WTC11 (cell line): ENCODE measurements at regions of chr5 and their contacts with region 1.

Region 1: DNA sequence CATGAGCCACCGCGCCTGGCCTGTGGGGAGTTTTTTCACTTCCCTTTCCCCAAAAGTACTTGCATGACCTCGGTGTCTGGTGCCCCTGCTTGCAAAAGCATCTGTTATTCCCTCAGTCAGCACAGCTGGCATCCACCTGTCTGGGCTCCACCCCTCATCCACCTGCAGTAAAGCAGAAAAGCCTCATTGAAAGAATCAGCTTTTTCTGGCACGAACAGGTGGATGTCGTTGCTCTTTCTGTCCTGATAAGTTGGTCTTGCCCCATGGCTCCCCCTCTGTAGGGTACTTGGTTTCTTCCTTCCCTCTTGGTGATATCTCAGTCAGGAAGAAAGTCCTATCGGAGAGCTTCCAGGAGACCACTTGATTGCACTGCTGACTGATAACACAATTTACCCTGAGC is 37.4 kb downstream of the WWC1 start:
- DNase-seq: peak; percentile 70
- ATAC-seq: peak; percentile 77
- H3K4me3 Mint-ChIP-seq: peak overlapping the region; percentile 57
- H3K27ac Mint-ChIP-seq: peak overlapping the region; percentile 96
- H3K4me1 Mint-ChIP-seq: peaks cover 81% of the 10 kb centered on the region
- H3K27me3 Mint-ChIP-seq: no peaks in the 10 kb centered on the region
- CTCF ChIP-seq: no peak

Region 2: GRCh38 chr5:168339109-168339771 is 10.4 kb after region 1 on chr5:
- CTCF ChIA-PET with region 1: interaction called, 11 read pairs
- POLR2A ChIA-PET with region 1: no interaction called
- DNase-seq: peak; percentile 62
- ATAC-seq: peak; percentile 64
- H3K4me3 Mint-ChIP-seq: no peak overlapping the region
- H3K27ac Mint-ChIP-seq: peak overlapping the region; percentile 14; the same call in 1 of the 2 replicates
- H3K4me1 Mint-ChIP-seq: peaks cover 62% of the 10 kb centered on the region
- H3K27me3 Mint-ChIP-seq: no peaks in the 10 kb centered on the region
- CTCF ChIP-seq: no peak